Activated naive CD4-positive, alpha-beta T cell treated with anti-CD3 and anti-CD28 coated beads, Interleukin-2, amount 10 ng/mL, durations not matched to agents 7 days and 5 days (primary cell): ENCODE measurements at regions of chr9 and their contacts with region 1.

Region 1: DNA sequence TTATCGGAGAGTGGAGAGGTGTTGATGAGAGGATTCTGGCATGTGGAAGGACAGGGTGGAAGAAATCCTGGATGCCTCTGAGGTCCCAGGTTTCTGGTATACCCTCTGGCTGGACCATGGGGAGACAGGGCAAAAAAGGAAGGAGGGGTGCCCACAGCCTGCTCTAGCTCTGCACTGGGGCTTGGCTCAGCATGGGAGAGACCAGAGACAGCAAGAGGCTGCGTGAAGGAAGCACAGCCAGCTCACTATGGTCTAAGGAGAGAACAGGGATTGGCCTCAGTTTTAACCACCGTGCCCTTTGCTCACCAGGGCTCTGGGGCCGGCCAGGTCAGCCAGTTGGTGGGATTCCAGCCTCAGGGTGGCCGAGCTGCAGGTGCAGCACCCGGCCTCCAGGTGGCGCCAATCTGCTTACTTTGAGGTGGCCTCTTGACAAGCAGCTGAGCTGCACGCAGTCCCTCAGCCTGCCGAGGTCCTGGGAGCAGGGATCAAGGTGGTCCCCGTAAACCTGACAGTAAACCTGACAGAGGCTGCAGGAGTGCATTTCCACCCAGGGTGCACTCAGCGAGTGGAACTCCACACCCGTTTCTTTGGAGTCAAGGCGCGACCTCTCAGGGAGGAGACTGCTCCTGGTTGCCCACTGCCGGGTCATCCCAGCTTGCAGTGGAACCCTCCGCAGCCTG is 25.0 kb upstream of the SPTLC1 start:
- DNase-seq: peak; percentile 83
- H3K4me3 Mint-ChIP-seq: no peak overlapping the region
- H3K27ac Mint-ChIP-seq: no peak overlapping the region
- H3K4me1 Mint-ChIP-seq: peaks cover 7% of the 10 kb centered on the region
- H3K27me3 Mint-ChIP-seq: peaks cover 87% of the 10 kb centered on the region

Region 2: DNA sequence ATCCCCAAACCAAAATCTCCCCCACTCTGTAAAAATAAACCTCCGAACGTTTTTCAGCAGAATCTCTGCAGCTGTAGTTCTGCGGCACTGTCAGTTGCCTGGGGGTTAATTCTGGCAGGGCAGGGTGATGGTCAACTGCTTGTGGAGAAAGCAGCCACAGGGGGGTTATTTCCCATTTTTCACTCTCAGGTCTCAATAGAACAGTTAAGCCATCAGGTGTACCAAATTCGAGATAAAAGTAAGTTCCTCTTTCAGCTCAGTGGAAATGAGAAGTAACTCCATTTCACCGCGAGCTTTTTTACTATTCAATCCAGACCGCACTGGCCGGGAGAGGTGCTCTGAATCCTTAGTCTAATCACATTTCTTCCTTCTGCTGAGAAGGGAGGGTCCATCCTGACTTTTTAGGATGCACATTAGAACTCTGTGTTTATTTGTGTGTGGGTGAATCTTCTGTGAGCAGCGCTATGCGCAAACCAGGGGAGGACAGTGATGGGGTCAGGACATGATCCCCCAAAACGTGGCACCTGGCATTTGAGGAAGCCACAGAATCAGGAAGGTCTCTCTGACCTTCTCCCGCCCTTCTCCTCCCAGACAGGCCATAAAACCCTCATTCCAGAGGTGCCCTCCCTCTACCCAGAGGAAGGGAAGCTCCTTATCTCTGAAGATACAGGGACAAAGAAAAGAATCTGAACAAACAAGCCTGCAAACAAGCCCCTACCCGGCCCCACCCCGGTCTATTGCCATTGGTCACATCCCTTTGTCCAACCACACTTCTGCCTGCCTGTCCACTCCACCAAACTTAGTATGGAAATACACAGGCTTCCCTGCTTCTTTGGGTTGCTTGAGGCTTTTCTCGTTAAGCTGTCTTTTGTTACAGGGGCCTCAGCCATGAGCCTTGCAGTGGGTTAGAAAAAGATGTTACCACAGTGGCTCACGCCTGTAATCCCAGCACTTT is 419.2 kb before region 1 on chr9:
- CTCF ChIA-PET with region 1: no interaction called
- DNase-seq: no peak
- H3K4me3 Mint-ChIP-seq: no peak overlapping the region
- H3K27ac Mint-ChIP-seq: no peak overlapping the region
- H3K4me1 Mint-ChIP-seq: no peaks in the 10 kb centered on the region
- H3K27me3 Mint-ChIP-seq: peaks cover 75% of the 10 kb centered on the region

Region 3: DNA sequence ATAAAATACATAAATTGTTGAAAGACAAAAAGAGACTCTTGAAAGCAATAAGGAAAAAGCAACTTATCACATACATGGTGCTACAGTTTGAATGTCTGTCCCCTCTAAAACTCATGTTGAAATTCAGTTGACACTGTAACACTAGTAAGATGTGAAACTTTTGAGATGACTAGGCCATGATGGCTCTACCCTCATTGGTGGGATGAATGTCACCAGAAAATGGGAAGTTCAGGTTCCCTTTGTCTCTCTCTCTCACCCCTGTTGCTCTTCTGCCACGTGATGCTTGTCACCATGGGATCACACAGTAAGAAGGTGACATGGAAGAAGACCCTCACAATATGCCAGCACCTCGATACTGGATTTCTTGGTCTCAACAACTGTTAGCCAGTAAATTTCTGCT is 25.3 kb after region 1 on chr9:
- CTCF ChIA-PET with region 1: interaction called, 13 read pairs
- DNase-seq: no peak
- H3K4me3 Mint-ChIP-seq: no peak overlapping the region
- H3K27ac Mint-ChIP-seq: no peak overlapping the region
- H3K4me1 Mint-ChIP-seq: no peaks in the 10 kb centered on the region
- H3K27me3 Mint-ChIP-seq: peaks cover 43% of the 10 kb centered on the region

Region 4: DNA sequence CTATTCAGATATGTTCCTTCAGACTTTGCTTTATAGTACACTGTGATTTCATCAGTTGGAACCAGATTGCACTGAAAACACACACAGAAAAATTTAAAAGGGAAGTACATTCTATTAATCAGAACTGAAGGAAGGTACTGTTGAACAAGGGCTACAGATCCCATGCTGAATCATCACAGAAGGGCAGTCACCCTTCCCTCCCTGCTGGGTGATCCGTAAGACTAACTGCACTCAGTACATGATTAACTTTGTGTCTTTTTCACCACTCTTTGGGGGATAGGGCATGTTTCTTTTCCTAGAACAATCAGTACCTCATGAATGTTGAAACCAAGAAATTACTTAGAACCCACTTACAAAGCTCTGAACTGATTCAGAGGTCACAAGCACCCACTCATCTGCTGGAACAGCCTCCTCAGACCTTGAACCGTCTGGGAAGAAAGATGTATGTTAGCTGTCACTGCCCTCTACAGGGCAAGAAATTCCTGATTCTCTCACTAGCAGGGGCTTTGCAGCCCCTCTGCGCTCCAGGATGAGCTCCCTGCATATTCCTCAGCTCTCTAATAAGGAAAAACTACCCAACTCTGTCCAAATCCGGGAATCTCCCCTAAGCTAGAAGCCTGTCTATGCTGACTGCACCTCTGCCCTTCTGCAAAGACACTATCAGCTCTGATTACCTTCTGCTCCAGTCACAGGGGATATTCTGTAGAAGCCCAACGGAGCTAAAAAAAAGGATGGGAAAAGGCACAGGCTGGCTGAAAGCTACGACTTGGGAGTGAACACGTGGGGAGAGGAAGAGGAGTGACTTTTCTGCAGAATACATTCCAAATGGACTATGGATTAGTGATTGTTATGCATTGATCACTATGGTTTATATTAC is 102.3 kb after region 1 on chr9:
- CTCF ChIA-PET with region 1: interaction called, 16 read pairs
- DNase-seq: no peak
- H3K4me3 Mint-ChIP-seq: no peak overlapping the region
- H3K27ac Mint-ChIP-seq: peak overlapping the region; percentile 43
- H3K4me1 Mint-ChIP-seq: no peaks in the 10 kb centered on the region
- H3K27me3 Mint-ChIP-seq: no peaks in the 10 kb centered on the region

Region 5: GRCh38 chr9:92634712-92635605 is 494.7 kb after region 1 on chr9:
- CTCF ChIA-PET with region 1: interaction called, 69 read pairs
- DNase-seq: peak; percentile 80
- H3K4me3 Mint-ChIP-seq: no peak overlapping the region
- H3K27ac Mint-ChIP-seq: no peak overlapping the region
- H3K4me1 Mint-ChIP-seq: no peaks in the 10 kb centered on the region
- H3K27me3 Mint-ChIP-seq: no peaks in the 10 kb centered on the region